ENCODE measurements at regions of chr11 and their contacts with region 1.

Region 1: GRCh38 chr11:86218125-86219084 is 26.1 kb upstream of the EED start:
- DNase-seq: peak; percentile 52
- H3K4me3 ChIP-seq: peak overlapping the region; percentile 52
- H3K27ac ChIP-seq: no peak overlapping the region
- H3K4me1 ChIP-seq: peaks cover 9% of the 10 kb centered on the region
- H3K27me3 ChIP-seq: no peaks in the 10 kb centered on the region
- CTCF ChIP-seq: peak; percentile 94

Region 2: DNA sequence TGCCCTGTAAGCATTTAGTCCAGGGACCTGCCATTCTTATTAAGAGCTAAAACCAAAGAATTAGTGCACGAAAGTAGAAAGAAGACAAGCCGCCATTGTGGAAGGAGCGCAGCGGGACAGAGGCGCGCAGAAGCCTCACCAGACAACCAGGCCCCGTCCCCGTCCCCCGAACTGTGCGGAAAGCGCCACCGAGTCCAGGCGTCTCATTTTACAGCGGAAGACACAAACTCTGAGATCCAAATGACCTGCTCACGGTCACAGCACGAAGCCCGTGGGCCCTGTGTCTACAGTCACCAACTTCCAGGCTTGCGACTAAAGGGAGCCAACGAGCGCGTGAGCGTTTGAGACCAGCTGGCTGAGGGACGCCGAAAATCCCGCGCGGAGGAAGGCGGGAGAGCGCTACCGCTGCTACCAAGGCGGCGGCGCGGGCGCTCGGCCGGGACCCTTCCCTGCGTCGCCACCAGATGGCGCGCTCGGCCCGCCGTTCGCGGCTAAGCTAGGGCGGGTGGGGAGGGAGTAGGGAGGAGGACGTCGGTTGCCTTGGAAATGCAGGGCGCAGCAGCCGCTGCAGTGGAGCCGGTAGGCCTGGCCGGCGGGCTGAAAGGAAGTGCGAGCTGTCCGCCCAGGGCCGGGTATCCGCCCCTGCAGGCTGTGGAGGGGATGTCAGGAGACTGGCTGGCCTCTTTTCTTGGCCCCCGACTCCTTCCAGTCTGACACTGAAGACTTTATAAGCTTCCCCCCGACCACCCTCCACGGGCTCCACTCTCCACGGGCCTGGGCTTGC is 363.7 kb before region 1 on chr11:
- intact Hi-C with region 1: no loop called
- DNase-seq: peak; percentile 92
- H3K4me3 ChIP-seq: peak overlapping the region; percentile 71
- H3K27ac ChIP-seq: peak overlapping the region; percentile 91
- H3K4me1 ChIP-seq: peaks cover 13% of the 10 kb centered on the region
- H3K27me3 ChIP-seq: no peaks in the 10 kb centered on the region
- CTCF ChIP-seq: peak; percentile 93

Region 3: GRCh38 chr11:85867751-85868150 is 350.7 kb before region 1 on chr11:
- intact Hi-C with region 1: loop called (anchors 10 kb)
- DNase-seq: no peak
- H3K4me3 ChIP-seq: no peak overlapping the region
- H3K27ac ChIP-seq: no peak overlapping the region
- H3K4me1 ChIP-seq: no peaks in the 10 kb centered on the region
- H3K27me3 ChIP-seq: no peaks in the 10 kb centered on the region
- CTCF ChIP-seq: no peak

Region 4: DNA sequence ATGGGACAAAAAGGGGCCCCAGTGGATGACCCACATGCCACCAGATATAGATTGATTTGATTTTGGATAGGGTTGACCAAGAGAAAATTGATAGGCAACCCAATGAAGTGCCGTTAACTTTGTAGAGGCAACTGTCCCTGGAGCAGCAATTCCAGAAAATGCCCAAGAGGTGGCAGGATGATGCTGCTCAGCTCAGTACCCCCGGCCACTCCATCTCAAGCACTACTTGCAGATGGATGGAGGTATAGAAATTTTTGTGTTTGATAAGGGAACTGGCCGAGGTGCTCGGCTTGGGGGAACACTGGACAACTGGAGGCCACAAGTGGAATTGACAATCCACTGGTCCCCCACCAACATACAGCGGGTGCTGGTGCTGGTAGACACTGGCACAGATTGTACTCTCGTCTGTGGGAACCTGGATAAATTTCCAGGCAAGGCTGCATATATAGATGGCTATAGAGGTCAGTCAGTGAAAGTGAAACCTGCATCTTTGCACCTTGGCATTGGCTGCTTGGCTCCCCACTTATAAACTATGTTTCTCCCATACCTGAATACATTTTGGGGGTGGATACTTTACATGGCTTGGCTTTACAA is 276.9 kb before region 1 on chr11:
- intact Hi-C with region 1: loop called (anchors 5 kb)
- DNase-seq: no peak
- H3K4me3 ChIP-seq: no peak overlapping the region
- H3K27ac ChIP-seq: no peak overlapping the region
- H3K4me1 ChIP-seq: peaks cover 9% of the 10 kb centered on the region
- H3K27me3 ChIP-seq: no peaks in the 10 kb centered on the region
- CTCF ChIP-seq: peak; percentile 85

Measured in left ventricle myocardium inferior (tissue), 1 donor.